ENCODE measurements at regions of chr12 and their contacts with region 1.

Region 1: DNA sequence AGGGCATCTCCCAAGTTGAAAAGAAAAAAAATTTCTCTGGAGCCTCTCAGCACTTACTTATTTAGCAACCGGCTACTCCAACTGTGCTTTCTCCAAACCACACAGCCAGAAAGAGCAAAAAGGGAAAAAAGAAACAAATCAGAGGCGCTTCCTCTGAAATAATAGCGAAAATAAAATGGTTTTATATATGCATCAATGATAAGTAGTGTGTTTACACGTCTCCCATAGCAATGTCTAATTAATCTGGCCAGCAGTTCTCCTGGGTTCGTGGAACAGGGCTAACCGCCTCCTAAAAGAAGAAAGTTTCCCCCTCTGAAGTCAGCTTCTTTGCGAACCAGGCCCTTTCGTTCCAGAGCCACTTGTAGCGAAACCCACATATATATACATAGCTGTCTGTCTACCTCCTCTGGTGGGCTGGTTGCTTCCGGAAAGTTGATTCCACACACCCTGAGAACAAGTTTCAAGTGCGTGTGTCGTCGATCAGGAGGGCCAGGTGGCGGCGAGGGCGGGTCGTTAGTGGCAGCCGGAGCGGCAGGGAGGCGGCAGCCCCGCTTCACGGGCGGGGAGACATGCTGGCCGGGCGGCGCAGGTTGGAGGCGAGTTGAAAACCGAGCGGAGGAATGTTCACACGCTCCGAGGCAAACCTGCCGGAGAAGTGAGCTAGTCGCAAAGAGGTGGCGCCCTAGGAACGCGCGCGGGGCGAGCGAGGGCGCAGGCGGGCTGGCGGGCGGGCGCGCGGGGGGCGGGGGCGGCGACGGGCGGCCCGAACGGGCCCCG is 2.7 kb downstream of the PTHLH start:
- DNase-seq: peak; percentile 95
- H3K4me3 ChIP-seq: peak overlapping the region; percentile 76 to 95 (median 91)
- H3K27ac ChIP-seq: peak overlapping the region; percentile 100
- H3K4me1 ChIP-seq: peaks cover 42% of the 10 kb centered on the region
- H3K27me3 ChIP-seq: no peaks in the 10 kb centered on the region
- CTCF ChIP-seq: peak in 1 of 2 donors; percentile 53

Region 2: GRCh38 chr12:27999521-27999920 is 29.7 kb after region 1 on chr12:
- CTCF ChIA-PET with region 1: no interaction called
- dilution Hi-C with region 1: no loop called
- in situ Hi-C with region 1: no loop called
- intact Hi-C with region 1: loop called (anchors 1 kb)
- DNase-seq: peak; percentile 97
- H3K4me3 ChIP-seq: no peak overlapping the region
- H3K27ac ChIP-seq: peak overlapping the region; percentile 92
- H3K4me1 ChIP-seq: peaks cover 24% of the 10 kb centered on the region
- H3K27me3 ChIP-seq: no peaks in the 10 kb centered on the region
- CTCF ChIP-seq: no peak

Region 3: GRCh38 chr12:28014196-28014595 is 44.4 kb after region 1 on chr12:
- CTCF ChIA-PET with region 1: no interaction called
- dilution Hi-C with region 1: no loop called
- in situ Hi-C with region 1: no loop called
- intact Hi-C with region 1: no loop called
- DNase-seq: no peak
- H3K4me3 ChIP-seq: no peak overlapping the region
- H3K27ac ChIP-seq: no peak overlapping the region
- H3K4me1 ChIP-seq: peaks cover 15% of the 10 kb centered on the region
- H3K27me3 ChIP-seq: no peaks in the 10 kb centered on the region
- CTCF ChIP-seq: no peak

Region 4: GRCh38 chr12:28057856-28058615 is 88.2 kb after region 1 on chr12:
- CTCF ChIA-PET with region 1: no interaction called
- dilution Hi-C with region 1: loop called (anchors 10 kb)
- in situ Hi-C with region 1: no loop called
- intact Hi-C with region 1: no loop called
- DNase-seq: peak; percentile 99
- H3K4me3 ChIP-seq: no peak overlapping the region
- H3K27ac ChIP-seq: peak overlapping the region; percentile 88
- H3K4me1 ChIP-seq: peaks cover 18% of the 10 kb centered on the region
- H3K27me3 ChIP-seq: no peaks in the 10 kb centered on the region
- CTCF ChIP-seq: no peak

Region 5: DNA sequence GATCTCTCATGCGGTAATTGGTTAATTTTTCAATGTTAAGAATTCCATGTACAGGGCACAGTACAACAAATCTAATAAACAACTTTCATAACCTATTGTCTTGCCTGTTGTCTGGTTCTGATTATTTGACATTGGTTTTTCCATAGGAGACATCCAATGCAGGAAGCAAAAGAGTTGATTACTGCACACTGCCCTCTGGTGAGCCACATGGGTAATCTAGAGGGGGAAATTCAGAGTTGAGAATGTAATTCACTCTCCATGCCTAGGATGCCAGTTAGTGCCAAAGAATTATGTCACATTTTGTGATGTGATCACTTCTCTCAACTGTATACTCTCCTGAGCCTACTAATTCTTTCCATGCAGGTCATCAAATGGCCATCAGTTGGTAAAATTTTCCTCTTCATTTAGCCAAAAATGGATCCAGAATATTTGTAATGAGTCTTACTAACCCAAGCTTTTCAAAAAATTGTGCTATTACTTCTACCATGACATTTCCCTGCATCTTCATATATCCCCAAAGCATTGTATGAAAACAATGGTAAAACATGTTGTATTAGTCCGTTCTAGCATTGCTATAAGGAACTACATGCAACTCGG is 202.7 kb after region 1 on chr12:
- CTCF ChIA-PET with region 1: no interaction called
- dilution Hi-C with region 1: no loop called
- in situ Hi-C with region 1: loop called (anchors 5 kb)
- intact Hi-C with region 1: loop called (anchors 1 kb)
- DNase-seq: peak; percentile 63
- H3K4me3 ChIP-seq: no peak overlapping the region
- H3K27ac ChIP-seq: peak overlapping the region; percentile 23
- H3K4me1 ChIP-seq: peaks cover 12% of the 10 kb centered on the region
- H3K27me3 ChIP-seq: no peaks in the 10 kb centered on the region
- CTCF ChIP-seq: peak; percentile 80 to 85

Region 6: GRCh38 chr12:28884904-28885679 is 915.3 kb after region 1 on chr12:
- CTCF ChIA-PET with region 1: no interaction called
- dilution Hi-C with region 1: loop called (anchors 5 kb)
- in situ Hi-C with region 1: no loop called
- intact Hi-C with region 1: no loop called
- DNase-seq: no peak
- H3K4me3 ChIP-seq: no peak overlapping the region
- H3K27ac ChIP-seq: no peak overlapping the region
- H3K4me1 ChIP-seq: peaks cover 10% of the 10 kb centered on the region
- H3K27me3 ChIP-seq: no peaks in the 10 kb centered on the region
- CTCF ChIP-seq: no peak

Region 7: DNA sequence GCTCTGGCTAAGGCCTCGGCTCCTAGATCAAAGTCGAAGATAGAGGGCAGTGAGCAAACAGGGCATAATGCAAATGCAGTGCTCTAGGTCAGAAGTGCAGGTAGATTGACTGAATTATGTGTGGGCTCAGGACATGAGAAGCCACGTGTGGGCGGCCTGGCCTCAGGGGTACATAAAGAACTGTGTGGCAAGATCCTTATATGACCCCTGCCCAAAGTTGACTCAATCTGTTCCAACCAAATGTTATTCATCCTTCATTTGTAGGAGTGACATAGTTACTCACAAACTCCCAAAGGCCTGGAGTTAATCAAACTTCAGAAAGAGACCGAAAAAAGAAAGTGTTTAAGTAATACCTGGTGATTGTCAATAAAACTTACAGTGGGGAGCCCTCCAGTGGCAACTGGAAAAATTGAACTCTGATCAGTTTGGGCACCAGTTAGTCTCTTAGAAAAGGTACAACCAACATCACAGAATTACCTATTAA is 1028.9 kb after region 1 on chr12:
- CTCF ChIA-PET with region 1: no interaction called
- dilution Hi-C with region 1: no loop called
- in situ Hi-C with region 1: no loop called
- intact Hi-C with region 1: loop called (anchors 5 kb)
- DNase-seq: peak; percentile 56
- H3K4me3 ChIP-seq: no peak overlapping the region
- H3K27ac ChIP-seq: no peak overlapping the region
- H3K4me1 ChIP-seq: peaks cover 10% of the 10 kb centered on the region
- H3K27me3 ChIP-seq: no peaks in the 10 kb centered on the region
- CTCF ChIP-seq: peak; percentile 51 to 61

Measured in mammary epithelial cell (primary cell).